Mucosa of descending colon (tissue), 3 donors: ENCODE measurements at regions of chr1 and their contacts with region 1.

Region 1: GRCh38 chr1:45490626-45491486 is at the start of gene TESK2:
- DNase-seq: peak; percentile 97 to 98 (median 97)
- ATAC-seq: peak; percentile 96
- H3K4me3 ChIP-seq: peak within 1 kb of the TSS; percentile 78
- H3K4me1 ChIP-seq: peaks cover 18% of the 10 kb centered on the region
- CTCF ChIP-seq: no peak
- total RNA-seq, gene TESK2: 10.7 to 19.9 (median 10.8) TPM

Region 2: DNA sequence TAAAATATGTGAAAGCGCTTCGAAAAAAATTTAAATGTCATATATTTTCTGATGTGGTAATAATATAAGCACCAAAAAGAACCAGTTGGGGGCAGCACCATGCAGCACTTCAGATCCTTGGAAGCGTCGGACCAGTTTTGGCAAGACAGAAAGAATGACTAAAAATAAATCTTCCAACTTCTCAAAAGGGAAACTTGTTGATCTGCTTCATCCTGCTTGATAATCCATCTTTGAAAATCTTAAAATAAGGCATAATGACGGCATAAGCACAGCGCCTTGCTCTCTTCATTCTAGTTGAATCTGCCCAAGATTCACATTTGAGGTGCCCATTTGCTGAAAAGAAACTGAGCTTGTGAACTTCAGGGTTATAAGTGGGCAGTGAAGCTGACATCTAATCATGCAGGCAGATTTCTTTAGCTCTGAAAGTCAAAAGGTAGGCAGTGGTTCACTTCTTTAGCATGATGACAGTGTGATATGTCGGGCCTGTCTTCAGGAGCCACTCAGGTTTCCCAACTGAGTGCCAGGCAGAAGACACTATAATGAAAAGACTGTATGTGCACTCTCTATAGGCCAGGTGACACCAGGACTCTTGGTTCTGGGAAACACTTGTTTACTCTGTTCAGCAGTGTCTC is 130.9 kb before region 1 on chr1:
- intact Hi-C with region 1: loop called in 1 of 2 experiments (anchors 2 kb)
- DNase-seq: peak in 2 of 3 donors; percentile 61 to 90
- ATAC-seq: peak; percentile 67
- H3K4me3 ChIP-seq: no peak overlapping the region
- H3K4me1 ChIP-seq: peaks cover 18% of the 10 kb centered on the region
- CTCF ChIP-seq: peak; percentile 38